CD8-positive, alpha-beta T cell (primary cell): ENCODE measurements at regions of chr1 and their contacts with region 1.

Region 1: GRCh38 chr1:114462341-114462740 is 48.7 kb downstream of the TRIM33 start:
- DNase-seq: no peak
- ATAC-seq: no peak
- H3K4me3 ChIP-seq: no peak overlapping the region
- H3K4me3 Mint-ChIP-seq: no peak overlapping the region
- H3K27ac ChIP-seq: no peak overlapping the region
- H3K27ac Mint-ChIP-seq: no peak overlapping the region
- H3K4me1 ChIP-seq: peaks cover 12% of the 10 kb centered on the region
- H3K4me1 Mint-ChIP-seq: peaks cover 40% of the 10 kb centered on the region
- H3K27me3 ChIP-seq: no peaks in the 10 kb centered on the region
- H3K27me3 Mint-ChIP-seq: no peaks in the 10 kb centered on the region
- CTCF ChIP-seq: no peak

Region 2: DNA sequence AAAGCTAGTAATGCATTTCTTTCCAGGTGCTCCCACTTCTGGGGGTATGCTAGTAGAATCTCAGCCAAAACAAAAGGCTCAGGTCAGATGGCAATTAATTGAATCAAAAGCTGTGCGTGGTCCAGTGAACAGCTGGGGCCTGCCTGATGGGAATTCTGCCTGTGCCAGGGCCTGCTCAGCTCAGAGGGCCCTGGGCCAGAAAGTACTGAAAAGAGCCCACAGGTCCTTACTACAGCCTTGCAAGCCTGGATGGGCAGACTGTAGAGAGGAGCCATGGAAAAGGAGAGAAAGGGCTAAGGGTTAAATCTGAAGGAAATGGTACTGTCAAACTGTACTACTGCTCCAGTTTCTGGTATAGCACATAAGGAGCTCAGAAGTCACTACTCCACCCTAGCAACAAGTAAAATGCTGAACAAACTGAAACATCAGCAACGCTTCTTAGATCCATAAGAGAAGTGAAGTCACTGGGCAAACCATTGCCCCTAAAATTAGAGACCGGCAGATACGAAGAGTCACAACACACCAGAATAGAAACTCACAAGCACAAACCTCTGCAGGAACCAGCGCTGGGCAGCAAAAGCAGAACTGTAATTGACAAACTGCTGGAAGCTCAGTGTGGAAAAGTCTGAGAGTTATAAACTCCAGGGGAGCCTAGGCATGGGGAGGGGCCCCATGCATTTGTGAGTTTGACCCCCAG is 187.6 kb before region 1 on chr1:
- CTCF ChIA-PET with region 1: no interaction called
- POLR2A ChIA-PET with region 1: no interaction called
- intact Hi-C with region 1: no loop called
- DNase-seq: no peak
- ATAC-seq: no peak
- H3K4me3 ChIP-seq: no peak overlapping the region
- H3K4me3 Mint-ChIP-seq: no peak overlapping the region
- H3K27ac ChIP-seq: no peak overlapping the region
- H3K27ac Mint-ChIP-seq: no peak overlapping the region
- H3K4me1 ChIP-seq: no peaks in the 10 kb centered on the region
- H3K4me1 Mint-ChIP-seq: peaks cover 1% of the 10 kb centered on the region
- H3K27me3 ChIP-seq: no peaks in the 10 kb centered on the region
- H3K27me3 Mint-ChIP-seq: peaks cover 4% of the 10 kb centered on the region
- CTCF ChIP-seq: no peak

Region 3: GRCh38 chr1:114482204-114482980 is 20.1 kb after region 1 on chr1:
- CTCF ChIA-PET with region 1: no interaction called
- POLR2A ChIA-PET with region 1: no interaction called
- intact Hi-C with region 1: loop called in 1 of 2 experiments (anchors 2 kb)
- DNase-seq: peak in 3 of 9 experiments; percentile 30 to 57 (median 34)
- ATAC-seq: peak; percentile 75
- H3K4me3 ChIP-seq: no peak overlapping the region
- H3K4me3 Mint-ChIP-seq: peak overlapping the region; percentile 62
- H3K27ac ChIP-seq: peak overlapping the region in 1 of 2 experiments; percentile 67
- H3K27ac Mint-ChIP-seq: peak overlapping the region; percentile 88
- H3K4me1 ChIP-seq: peaks cover 19% of the 10 kb centered on the region
- H3K4me1 Mint-ChIP-seq: peaks cover 54% of the 10 kb centered on the region
- H3K27me3 ChIP-seq: no peaks in the 10 kb centered on the region
- H3K27me3 Mint-ChIP-seq: no peaks in the 10 kb centered on the region
- CTCF ChIP-seq: no peak